IMR-90 (cell line): ENCODE measurements at regions of chr4 and their contacts with region 1.

Region 1: GRCh38 chr4:68732653-68733466 is 62.4 kb upstream of the UGT2B15 start:
- DNase-seq: no peak
- ATAC-seq: no peak
- H3K4me3 ChIP-seq: no peak overlapping the region
- H3K27ac ChIP-seq: no peak overlapping the region
- H3K4me1 ChIP-seq: no peaks in the 10 kb centered on the region
- H3K27me3 ChIP-seq: no peaks in the 10 kb centered on the region
- CTCF ChIP-seq: no peak
- POLR2A ChIP-seq: no peak
- RAD21 ChIP-seq: no peak

Region 2: DNA sequence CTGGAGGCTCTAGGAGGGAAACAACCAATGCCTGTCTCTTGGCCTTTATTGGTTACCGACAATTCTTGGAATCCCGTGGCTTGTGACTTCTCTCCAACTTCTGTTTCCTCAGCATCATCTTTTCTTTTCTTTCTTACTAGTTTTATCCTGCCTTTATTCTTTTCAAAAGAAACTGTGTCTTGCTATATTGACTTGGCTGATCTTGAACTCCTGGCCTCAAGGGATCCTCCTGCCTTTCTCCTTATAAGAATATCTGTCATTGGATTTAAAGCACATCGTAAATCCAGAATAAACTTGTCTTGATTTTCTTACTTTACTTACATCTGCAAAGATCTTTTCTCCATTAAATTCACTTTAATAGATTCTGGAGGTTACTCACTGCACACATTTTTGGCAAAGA is 33.0 kb after region 1 on chr4:
- CTCF ChIA-PET with region 1: no interaction called
- POLR2A ChIA-PET with region 1: no interaction called
- dilution Hi-C with region 1: no loop called
- in situ Hi-C with region 1: no loop called
- intact Hi-C with region 1: loop called (anchors 1 kb)
- DNase-seq: no peak
- ATAC-seq: no peak
- H3K4me3 ChIP-seq: no peak overlapping the region
- H3K27ac ChIP-seq: no peak overlapping the region
- H3K4me1 ChIP-seq: no peaks in the 10 kb centered on the region
- H3K27me3 ChIP-seq: no peaks in the 10 kb centered on the region
- CTCF ChIP-seq: no peak
- POLR2A ChIP-seq: no peak
- RAD21 ChIP-seq: no peak

Region 3: DNA sequence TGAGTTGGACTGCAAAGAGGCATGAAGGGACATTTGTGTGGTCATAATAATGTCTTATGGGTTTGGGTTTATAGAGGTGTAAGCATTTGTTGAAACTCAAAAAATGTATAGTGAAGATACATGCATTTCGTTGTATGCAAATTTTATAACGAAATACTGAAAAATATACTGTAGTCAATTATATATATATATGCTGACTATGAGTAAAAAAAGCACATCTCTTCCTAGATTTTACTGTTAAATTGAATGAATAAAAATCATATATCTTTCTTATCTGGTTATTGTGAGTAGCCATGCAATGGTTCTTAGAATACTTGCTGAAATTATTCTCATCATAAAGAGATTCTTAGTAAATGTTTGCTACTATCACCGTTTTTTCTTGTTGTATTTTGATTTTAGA is 117.4 kb after region 1 on chr4:
- CTCF ChIA-PET with region 1: no interaction called
- POLR2A ChIA-PET with region 1: no interaction called
- dilution Hi-C with region 1: no loop called
- in situ Hi-C with region 1: no loop called
- intact Hi-C with region 1: no loop called
- DNase-seq: no peak
- ATAC-seq: no peak
- H3K4me3 ChIP-seq: no peak overlapping the region
- H3K27ac ChIP-seq: no peak overlapping the region
- H3K4me1 ChIP-seq: no peaks in the 10 kb centered on the region
- H3K27me3 ChIP-seq: no peaks in the 10 kb centered on the region
- CTCF ChIP-seq: no peak
- POLR2A ChIP-seq: no peak
- RAD21 ChIP-seq: no peak